ENCODE measurements at regions of chr3 and their contacts with region 1.

Region 1: DNA sequence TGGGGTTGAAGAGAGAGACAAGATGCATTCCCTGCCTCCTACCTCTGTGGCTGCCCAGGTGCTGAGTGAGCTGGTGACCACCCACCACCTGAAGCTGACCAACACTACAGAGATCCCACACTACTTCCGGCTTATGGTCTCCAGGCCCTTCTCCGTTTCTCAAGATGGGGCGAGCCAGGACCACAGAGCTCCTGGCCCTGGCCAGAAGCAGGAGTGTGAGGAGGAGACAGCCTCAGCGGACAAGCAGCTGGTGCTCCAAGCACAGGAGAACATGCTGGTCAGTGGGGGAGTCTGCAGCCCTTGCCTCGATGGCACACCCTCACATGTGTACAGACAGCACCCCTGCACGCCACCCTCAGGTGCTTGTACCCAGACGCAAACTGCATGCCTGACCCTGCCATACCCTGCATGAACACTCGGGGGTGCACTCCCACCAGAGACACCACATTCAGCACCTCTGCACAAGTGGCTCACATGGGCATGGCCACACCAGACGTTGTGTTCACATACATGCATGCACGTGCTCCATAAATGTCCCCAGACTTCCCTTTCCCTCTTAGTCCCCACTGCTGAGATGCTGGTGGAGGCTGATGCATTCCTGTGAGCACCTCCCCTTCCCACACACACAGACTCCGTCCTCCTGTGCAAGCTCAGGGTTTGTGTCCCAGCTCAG is 19.0 kb downstream of the ACAA1 start:
- DNase-seq: no peak
- H3K4me3 ChIP-seq: no peak overlapping the region
- H3K27me3 ChIP-seq: no peaks in the 10 kb centered on the region
- CTCF ChIP-seq: peak; percentile 83

Region 2: GRCh38 chr3:37700466-37701248 is 417.2 kb before region 1 on chr3:
- CTCF ChIA-PET with region 1: no interaction called
- POLR2A ChIA-PET with region 1: no interaction called
- DNase-seq: no peak
- H3K4me3 ChIP-seq: no peak overlapping the region
- H3K27me3 ChIP-seq: no peaks in the 10 kb centered on the region
- CTCF ChIP-seq: no peak

Region 3: GRCh38 chr3:38131621-38132369 is 13.9 kb after region 1 on chr3:
- CTCF ChIA-PET with region 1: interaction called, 39 read pairs
- POLR2A ChIA-PET with region 1: no interaction called
- DNase-seq: no peak
- H3K4me3 ChIP-seq: no peak overlapping the region
- H3K27me3 ChIP-seq: no peaks in the 10 kb centered on the region
- CTCF ChIP-seq: peak; percentile 55

Region 4: GRCh38 chr3:38214560-38214959 is 96.7 kb after region 1 on chr3:
- CTCF ChIA-PET with region 1: no interaction called
- POLR2A ChIA-PET with region 1: no interaction called
- DNase-seq: no peak
- H3K4me3 ChIP-seq: no peak overlapping the region
- H3K27me3 ChIP-seq: no peaks in the 10 kb centered on the region
- CTCF ChIP-seq: no peak

Measured in BJ (cell line).